CD4-positive, alpha-beta T cell (primary cell): ENCODE measurements at regions of chr10 and their contacts with region 1.

Region 1: DNA sequence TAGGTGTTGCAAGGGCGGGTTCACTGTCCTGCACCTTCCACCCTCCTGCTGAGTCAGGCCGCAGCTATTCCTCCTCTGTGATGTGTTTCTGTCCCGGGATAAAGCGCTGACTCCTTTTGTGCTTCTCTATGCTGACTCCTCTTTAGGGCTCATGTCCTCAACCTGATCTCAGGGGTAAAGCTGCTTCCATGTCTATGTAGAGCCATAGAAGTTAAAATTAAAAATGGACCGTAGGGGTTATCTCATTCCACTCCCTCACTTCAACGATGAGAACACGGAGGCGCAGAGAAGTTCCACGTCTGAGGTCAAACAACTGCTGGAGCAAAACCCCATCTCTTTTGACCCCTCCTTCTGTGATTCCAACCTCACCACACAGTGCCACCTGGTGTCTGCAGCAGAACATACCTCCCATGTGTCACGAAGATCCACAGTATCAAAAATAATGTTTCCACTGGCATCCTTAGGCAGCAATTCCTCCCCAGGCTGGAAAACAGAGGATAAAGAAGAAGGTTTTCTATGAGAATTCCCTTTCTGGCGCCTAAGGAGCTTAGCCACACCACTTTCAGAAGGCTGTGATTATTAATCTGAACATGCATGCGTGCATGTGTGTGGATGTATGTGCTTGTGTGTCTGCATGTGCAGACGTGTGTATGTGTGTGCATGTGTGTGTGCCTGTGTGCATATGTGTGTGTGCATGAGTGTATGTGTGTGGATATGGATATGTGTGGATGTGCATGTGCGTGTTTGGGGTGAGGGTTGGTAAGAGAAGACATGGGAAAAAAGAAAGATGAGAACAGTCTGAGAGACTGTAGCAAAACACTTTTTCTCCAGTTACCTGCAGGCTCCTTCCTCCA is 81.2 kb upstream of the UCN3 start:
- DNase-seq: peak in 12 of 14 experiments; percentile 11 to 82 (median 62)
- ATAC-seq: peak; percentile 80
- H3K4me3 ChIP-seq: no peak overlapping the region
- H3K4me3 Mint-ChIP-seq: no peak overlapping the region
- H3K27ac ChIP-seq: no peak overlapping the region
- H3K27ac Mint-ChIP-seq: no peak overlapping the region
- H3K4me1 ChIP-seq: peaks cover 26% of the 10 kb centered on the region
- H3K4me1 Mint-ChIP-seq: peaks cover 18% of the 10 kb centered on the region
- H3K27me3 ChIP-seq: no peaks in the 10 kb centered on the region
- H3K27me3 Mint-ChIP-seq: peaks cover 5% of the 10 kb centered on the region
- CTCF ChIP-seq: peak; percentile 72

Region 2: GRCh38 chr10:4819707-4820106 is 463.8 kb before region 1 on chr10:
- CTCF ChIA-PET with region 1: interaction called, 3 read pairs
- POLR2A ChIA-PET with region 1: no interaction called
- intact Hi-C with region 1: loop called in 1 of 2 experiments (anchors 2 kb)
- DNase-seq: no peak
- ATAC-seq: no peak
- H3K4me3 ChIP-seq: no peak overlapping the region
- H3K4me3 Mint-ChIP-seq: no peak overlapping the region
- H3K27ac ChIP-seq: no peak overlapping the region
- H3K27ac Mint-ChIP-seq: no peak overlapping the region
- H3K4me1 ChIP-seq: peaks cover 3% of the 10 kb centered on the region
- H3K4me1 Mint-ChIP-seq: no peaks in the 10 kb centered on the region
- H3K27me3 ChIP-seq: peaks cover 0 to 4% of the 10 kb centered on the region in 2 experiments
- H3K27me3 Mint-ChIP-seq: peaks cover 23% of the 10 kb centered on the region
- CTCF ChIP-seq: no peak

Region 3: GRCh38 chr10:5014936-5015335 is 268.6 kb before region 1 on chr10:
- CTCF ChIA-PET with region 1: no interaction called
- POLR2A ChIA-PET with region 1: no interaction called
- intact Hi-C with region 1: loop called in 1 of 2 experiments (anchors 5 kb)
- DNase-seq: peak in 2 of 14 experiments; percentile 1 to 6
- ATAC-seq: no peak
- H3K4me3 ChIP-seq: no peak overlapping the region
- H3K4me3 Mint-ChIP-seq: no peak overlapping the region
- H3K27ac ChIP-seq: no peak overlapping the region
- H3K27ac Mint-ChIP-seq: no peak overlapping the region
- H3K4me1 ChIP-seq: no peaks in the 10 kb centered on the region
- H3K4me1 Mint-ChIP-seq: no peaks in the 10 kb centered on the region
- H3K27me3 ChIP-seq: no peaks in the 10 kb centered on the region
- H3K27me3 Mint-ChIP-seq: no peaks in the 10 kb centered on the region
- CTCF ChIP-seq: no peak

Region 4: GRCh38 chr10:5293691-5294550 is 10.4 kb after region 1 on chr10:
- CTCF ChIA-PET with region 1: interaction called, 14 read pairs
- POLR2A ChIA-PET with region 1: interaction called, 5 read pairs
- intact Hi-C with region 1: no loop called
- DNase-seq: peak in 10 of 14 experiments; percentile 43 to 86 (median 70)
- ATAC-seq: peak; percentile 59
- H3K4me3 ChIP-seq: peak overlapping the region; percentile 60
- H3K4me3 Mint-ChIP-seq: peak overlapping the region; percentile 90
- H3K27ac ChIP-seq: peak overlapping the region; percentile 77 to 95
- H3K27ac Mint-ChIP-seq: peak overlapping the region; percentile 99
- H3K4me1 ChIP-seq: peaks cover 83% of the 10 kb centered on the region
- H3K4me1 Mint-ChIP-seq: peaks cover 81% of the 10 kb centered on the region
- H3K27me3 ChIP-seq: no peaks in the 10 kb centered on the region
- H3K27me3 Mint-ChIP-seq: no peaks in the 10 kb centered on the region
- CTCF ChIP-seq: no peak

Region 5: DNA sequence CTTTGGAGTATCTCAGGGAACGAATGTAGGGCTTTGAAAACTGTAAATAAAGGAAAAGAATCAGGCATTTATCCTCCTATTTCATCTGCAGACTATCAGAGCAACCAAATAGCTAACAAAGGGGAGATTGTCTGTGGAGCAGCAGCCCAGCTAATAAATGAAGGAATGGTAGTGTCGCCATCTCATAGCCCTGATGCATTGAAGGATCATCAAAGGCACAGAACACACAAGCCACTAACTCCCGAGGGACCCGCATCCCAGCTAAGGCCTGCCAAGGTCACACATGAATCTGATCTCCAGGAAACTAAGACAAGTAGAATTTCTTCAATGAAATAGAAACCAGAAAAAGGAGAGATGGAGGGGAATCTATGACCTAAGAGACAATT is 177.7 kb after region 1 on chr10:
- CTCF ChIA-PET with region 1: no interaction called
- POLR2A ChIA-PET with region 1: no interaction called
- intact Hi-C with region 1: no loop called
- DNase-seq: no peak
- ATAC-seq: no peak
- H3K4me3 ChIP-seq: no peak overlapping the region
- H3K4me3 Mint-ChIP-seq: no peak overlapping the region
- H3K27ac ChIP-seq: no peak overlapping the region
- H3K27ac Mint-ChIP-seq: no peak overlapping the region
- H3K4me1 ChIP-seq: no peaks in the 10 kb centered on the region
- H3K4me1 Mint-ChIP-seq: peaks cover 12% of the 10 kb centered on the region
- H3K27me3 ChIP-seq: no peaks in the 10 kb centered on the region
- H3K27me3 Mint-ChIP-seq: no peaks in the 10 kb centered on the region
- CTCF ChIP-seq: no peak